Spleen (tissue), 13 donors: ENCODE measurements at regions of chr10 and their contacts with region 1.

Region 1: GRCh38 chr10:87966459-87966858 is 103.0 kb downstream of the PTEN start:
- DNase-seq: no peak
- H3K4me3 ChIP-seq: no peak overlapping the region
- H3K27ac ChIP-seq: no peak overlapping the region
- H3K4me1 ChIP-seq: peaks cover 0 to 5% (median 0%) of the 10 kb centered on the region in 6 donors
- H3K27me3 ChIP-seq: no peaks in the 10 kb centered on the region
- CTCF ChIP-seq: no peak
- POLR2A ChIP-seq: no peak

Region 2: DNA sequence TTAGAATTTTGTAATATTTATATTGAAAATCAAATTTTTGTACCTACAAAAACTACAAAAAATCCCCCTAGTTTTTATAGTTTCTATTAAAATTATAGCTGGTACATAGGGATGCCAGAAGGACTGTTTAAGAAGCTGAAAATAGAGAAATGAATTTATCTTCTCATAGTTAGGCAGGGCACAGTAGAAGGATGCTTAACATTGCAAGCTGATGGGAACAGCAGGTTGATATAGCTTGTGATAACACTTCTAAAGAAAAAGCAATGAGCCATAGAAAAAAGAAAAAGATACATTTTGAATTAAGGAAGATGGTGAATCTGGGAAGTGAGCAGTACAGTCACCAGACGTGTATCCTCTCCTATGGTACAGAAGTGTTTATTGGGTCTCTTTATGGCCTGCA is 71.0 kb before region 1 on chr10:
- intact Hi-C with region 1: loop called (anchors 5 kb)
- DNase-seq: no peak
- H3K4me3 ChIP-seq: no peak overlapping the region
- H3K27ac ChIP-seq: peak overlapping the region in 1 of 8 donors; percentile 1
- H3K4me1 ChIP-seq: peaks cover 0 to 84% (median 45%) of the 10 kb centered on the region in 6 donors
- H3K27me3 ChIP-seq: no peaks in the 10 kb centered on the region
- CTCF ChIP-seq: no peak
- POLR2A ChIP-seq: no peak

Region 3: DNA sequence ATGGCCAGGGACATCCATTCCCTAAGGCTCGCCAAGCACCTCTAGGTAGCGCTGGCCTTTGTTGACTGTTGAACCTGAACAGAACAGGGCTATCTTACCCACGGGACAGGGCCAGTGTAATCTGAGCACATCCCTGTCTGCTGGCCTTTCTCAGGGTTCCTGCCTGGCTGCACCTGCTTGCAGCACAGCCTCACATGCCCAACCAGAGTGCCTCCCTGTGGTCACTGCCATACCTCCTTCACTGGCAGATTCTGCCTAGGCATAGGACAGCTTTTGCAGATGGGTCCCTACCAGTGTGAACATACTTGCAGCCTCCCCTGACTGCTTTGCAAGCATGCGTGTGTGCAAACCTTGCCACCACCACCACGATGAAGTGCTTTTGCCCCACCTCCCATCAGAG is 777.5 kb after region 1 on chr10:
- intact Hi-C with region 1: no loop called
- DNase-seq: no peak
- H3K4me3 ChIP-seq: no peak overlapping the region
- H3K27ac ChIP-seq: no peak overlapping the region
- H3K4me1 ChIP-seq: no peaks in the 10 kb centered on the region
- H3K27me3 ChIP-seq: peaks cover 0 to 12% (median 0%) of the 10 kb centered on the region in 7 donors
- CTCF ChIP-seq: no peak
- POLR2A ChIP-seq: no peak